CD8-positive, alpha-beta T cell (primary cell): ENCODE measurements at regions of chr3 and their contacts with region 1.

Region 1: DNA sequence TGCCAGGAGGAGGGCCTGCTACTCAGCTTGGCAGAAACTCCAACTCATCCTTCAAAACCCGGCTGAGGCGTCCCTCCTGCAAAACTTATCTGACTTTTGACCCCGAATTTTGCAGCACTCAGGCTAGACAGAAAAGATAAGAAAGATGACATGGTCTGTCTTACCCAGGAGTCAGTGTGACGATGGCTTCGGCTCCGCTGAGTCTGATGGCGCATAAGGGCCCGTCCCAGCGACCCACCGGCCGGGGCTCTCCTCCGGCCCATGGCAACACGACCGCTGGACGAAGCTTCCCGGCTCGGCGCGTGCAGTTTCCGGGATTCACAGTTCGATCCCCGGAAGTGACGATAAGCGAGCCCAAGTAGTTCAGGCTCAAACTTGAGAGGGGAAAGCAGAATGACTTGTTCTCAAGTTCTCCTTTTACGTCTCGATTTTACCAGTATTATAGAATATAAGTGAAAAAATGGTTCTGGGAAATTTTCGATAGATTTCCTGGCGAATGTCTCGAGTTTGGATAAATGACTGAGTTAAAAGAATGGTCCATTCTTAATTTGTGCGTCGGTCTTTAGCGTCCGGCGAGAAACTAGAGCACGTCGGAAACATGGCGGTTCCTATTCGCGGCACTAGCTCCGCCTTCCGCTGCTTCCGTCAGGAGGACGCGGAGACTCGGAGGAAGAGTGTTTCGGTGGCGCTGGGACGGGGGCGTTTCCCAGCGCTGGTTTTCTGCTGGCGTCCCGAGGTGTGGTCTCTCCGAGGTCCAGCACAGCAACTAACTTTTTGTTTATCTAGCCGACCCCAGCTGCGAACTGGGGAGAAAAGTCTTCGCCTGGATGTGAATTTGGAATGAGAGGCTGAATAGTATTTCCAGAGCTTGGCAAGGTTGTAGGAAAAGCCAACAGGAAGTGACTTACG is at the start of gene LSG1:
- DNase-seq: peak; percentile 75 to 97 (median 91)
- ATAC-seq: peak; percentile 97
- H3K4me3 ChIP-seq: peak within 1 kb of the TSS; percentile 82 to 83
- H3K4me3 Mint-ChIP-seq: peak within 1 kb of the TSS; percentile 98
- H3K27ac ChIP-seq: peak within 1 kb of the TSS; percentile 88 to 92
- H3K27ac Mint-ChIP-seq: peak within 1 kb of the TSS; percentile 99
- H3K4me1 ChIP-seq: peaks cover 15% of the 10 kb centered on the region
- H3K4me1 Mint-ChIP-seq: peaks cover 45% of the 10 kb centered on the region
- H3K27me3 ChIP-seq: no peaks in the 10 kb centered on the region
- H3K27me3 Mint-ChIP-seq: no peaks in the 10 kb centered on the region
- CTCF ChIP-seq: no peak
- total RNA-seq, gene LSG1: 63.8 to 69.6 TPM

Region 2: GRCh38 chr3:194134757-194135528 is 537.2 kb before region 1 on chr3:
- CTCF ChIA-PET with region 1: no interaction called
- POLR2A ChIA-PET with region 1: no interaction called
- intact Hi-C with region 1: no loop called
- DNase-seq: peak; percentile 56 to 90 (median 75)
- ATAC-seq: peak; percentile 67
- H3K4me3 ChIP-seq: peak overlapping the region; percentile 41 to 52
- H3K4me3 Mint-ChIP-seq: peak overlapping the region; percentile 86
- H3K27ac ChIP-seq: no peak overlapping the region
- H3K27ac Mint-ChIP-seq: peak overlapping the region; percentile 91
- H3K4me1 ChIP-seq: peaks cover 41% of the 10 kb centered on the region
- H3K4me1 Mint-ChIP-seq: peaks cover 48% of the 10 kb centered on the region
- H3K27me3 ChIP-seq: peaks cover 32 to 40% of the 10 kb centered on the region in 2 experiments
- H3K27me3 Mint-ChIP-seq: peaks cover 65% of the 10 kb centered on the region
- CTCF ChIP-seq: no peak

Region 3: GRCh38 chr3:194583604-194584318 is 88.4 kb before region 1 on chr3:
- CTCF ChIA-PET with region 1: no interaction called
- POLR2A ChIA-PET with region 1: no interaction called
- intact Hi-C with region 1: loop called in 1 of 2 experiments (anchors 5 kb)
- DNase-seq: peak; percentile 84 to 96 (median 93)
- ATAC-seq: peak; percentile 94
- H3K4me3 ChIP-seq: peak overlapping the region; percentile 75 to 99
- H3K4me3 Mint-ChIP-seq: peak overlapping the region; percentile 91
- H3K27ac ChIP-seq: peak overlapping the region; percentile 64 to 94
- H3K27ac Mint-ChIP-seq: peak overlapping the region; percentile 94
- H3K4me1 ChIP-seq: peaks cover 12% of the 10 kb centered on the region
- H3K4me1 Mint-ChIP-seq: peaks cover 10% of the 10 kb centered on the region
- H3K27me3 ChIP-seq: no peaks in the 10 kb centered on the region
- H3K27me3 Mint-ChIP-seq: no peaks in the 10 kb centered on the region
- CTCF ChIP-seq: no peak

Region 4: DNA sequence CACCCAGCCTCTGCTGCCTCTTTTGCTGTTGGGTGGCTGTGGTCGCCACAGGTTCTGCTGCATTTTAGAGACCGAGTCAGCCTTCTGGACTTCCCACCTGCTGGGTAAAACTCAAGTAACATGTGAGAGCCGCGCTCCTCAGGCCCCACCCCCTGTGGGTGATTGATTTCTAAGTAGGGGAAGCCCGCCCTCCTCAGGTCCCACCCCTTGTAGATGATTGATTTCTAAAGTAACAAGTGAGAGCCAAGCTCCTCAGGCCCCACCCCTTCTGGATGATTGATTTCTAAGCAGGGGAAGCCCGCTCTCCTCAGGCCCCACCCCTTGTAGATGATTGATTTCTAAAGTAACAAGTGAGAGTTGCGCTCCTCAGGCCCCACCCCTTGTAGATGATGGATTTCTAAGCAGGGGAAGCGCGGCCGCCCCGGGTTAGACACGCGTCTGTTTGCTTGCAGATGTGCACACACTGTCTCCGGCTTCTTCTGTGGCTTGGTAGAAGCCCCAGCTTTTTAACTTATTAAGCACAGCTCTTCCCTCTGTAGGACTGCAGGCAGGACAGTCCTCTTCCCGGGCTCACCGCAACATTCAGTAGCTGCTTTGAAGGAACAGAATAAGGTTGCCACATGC is 97.0 kb after region 1 on chr3:
- CTCF ChIA-PET with region 1: no interaction called
- POLR2A ChIA-PET with region 1: interaction called, 4 read pairs
- intact Hi-C with region 1: loop called (anchors 1 kb)
- DNase-seq: peak; percentile 82 to 98 (median 89)
- ATAC-seq: peak; percentile 96
- H3K4me3 ChIP-seq: peak overlapping the region; percentile 45 to 51
- H3K4me3 Mint-ChIP-seq: peak overlapping the region; percentile 84
- H3K27ac ChIP-seq: peak overlapping the region; percentile 15 to 71
- H3K27ac Mint-ChIP-seq: peak overlapping the region; percentile 92
- H3K4me1 ChIP-seq: peaks cover 11% of the 10 kb centered on the region
- H3K4me1 Mint-ChIP-seq: peaks cover 26% of the 10 kb centered on the region
- H3K27me3 ChIP-seq: peaks cover 0 to 2% of the 10 kb centered on the region in 2 experiments
- H3K27me3 Mint-ChIP-seq: peaks cover 7% of the 10 kb centered on the region
- CTCF ChIP-seq: no peak

Region 5: GRCh38 chr3:195259475-195260279 is 587.5 kb after region 1 on chr3:
- CTCF ChIA-PET with region 1: interaction called, 20 read pairs
- POLR2A ChIA-PET with region 1: interaction called, 12 read pairs
- intact Hi-C with region 1: loop called (anchors 1 kb)
- DNase-seq: peak; percentile 82 to 95 (median 93)
- ATAC-seq: peak; percentile 91
- H3K4me3 ChIP-seq: peak overlapping the region; percentile 74 to 86
- H3K4me3 Mint-ChIP-seq: peak overlapping the region; percentile 72
- H3K27ac ChIP-seq: peak overlapping the region; percentile 60 to 86
- H3K27ac Mint-ChIP-seq: peak overlapping the region; percentile 87
- H3K4me1 ChIP-seq: peaks cover 32% of the 10 kb centered on the region
- H3K4me1 Mint-ChIP-seq: peaks cover 18% of the 10 kb centered on the region
- H3K27me3 ChIP-seq: no peaks in the 10 kb centered on the region
- H3K27me3 Mint-ChIP-seq: no peaks in the 10 kb centered on the region
- CTCF ChIP-seq: peak; percentile 71

Region 6: GRCh38 chr3:195522254-195523023 is 850.3 kb after region 1 on chr3:
- CTCF ChIA-PET with region 1: no interaction called
- POLR2A ChIA-PET with region 1: no interaction called
- intact Hi-C with region 1: loop called in 1 of 2 experiments (anchors 5 kb)
- DNase-seq: peak in 3 of 9 experiments; percentile 52 to 65 (median 56)
- ATAC-seq: peak; percentile 30
- H3K4me3 ChIP-seq: no peak overlapping the region
- H3K4me3 Mint-ChIP-seq: no peak overlapping the region
- H3K27ac ChIP-seq: no peak overlapping the region
- H3K27ac Mint-ChIP-seq: peak overlapping the region; percentile 75
- H3K4me1 ChIP-seq: peaks cover 35% of the 10 kb centered on the region
- H3K4me1 Mint-ChIP-seq: peaks cover 46% of the 10 kb centered on the region
- H3K27me3 ChIP-seq: no peaks in the 10 kb centered on the region
- H3K27me3 Mint-ChIP-seq: no peaks in the 10 kb centered on the region
- CTCF ChIP-seq: peak; percentile 93